ENCODE measurements at regions of chr1 and their contacts with region 1.

Region 1: GRCh38 chr1:92934395-92935378 is 26.6 kb downstream of the DIPK1A start:
- DNase-seq: peak in 1 of 2 donors; percentile 5
- ATAC-seq: peak; percentile 41 to 52
- H3K4me3 ChIP-seq: no peak overlapping the region
- H3K27ac ChIP-seq: peak overlapping the region; percentile 8 to 68 (median 30)
- H3K4me1 ChIP-seq: peaks cover 23 to 27% of the 10 kb centered on the region in 2 donors
- H3K27me3 ChIP-seq: no peaks in the 10 kb centered on the region
- CTCF ChIP-seq: no peak
- POLR2A ChIP-seq: no peak

Region 2: DNA sequence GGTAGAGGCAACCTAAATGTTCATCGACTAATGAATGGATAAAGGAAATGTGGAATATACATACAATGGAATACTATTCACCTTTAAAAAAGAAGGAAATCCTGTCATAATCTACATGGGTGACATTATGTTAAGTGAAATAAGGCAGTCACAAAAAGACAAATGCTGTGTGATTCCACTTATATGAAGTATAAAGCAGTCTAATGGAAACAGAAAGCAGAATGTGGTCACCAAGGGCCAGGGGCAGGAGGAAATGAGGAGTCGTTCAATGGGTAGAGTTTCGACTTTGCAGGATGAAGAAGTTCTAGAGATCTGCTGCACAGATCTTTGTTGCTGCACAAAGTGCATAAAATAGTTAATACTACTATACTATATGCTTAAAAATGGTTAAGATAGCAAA is 18.8 kb after region 1 on chr1:
- in situ Hi-C with region 1: no loop called
- intact Hi-C with region 1: loop called (anchors 2 kb)
- DNase-seq: no peak
- ATAC-seq: no peak
- H3K4me3 ChIP-seq: no peak overlapping the region
- H3K27ac ChIP-seq: peak overlapping the region in 1 of 4 donors; percentile 57
- H3K4me1 ChIP-seq: peaks cover 38 to 46% of the 10 kb centered on the region in 2 donors
- H3K27me3 ChIP-seq: no peaks in the 10 kb centered on the region
- CTCF ChIP-seq: no peak
- POLR2A ChIP-seq: no peak

Region 3: DNA sequence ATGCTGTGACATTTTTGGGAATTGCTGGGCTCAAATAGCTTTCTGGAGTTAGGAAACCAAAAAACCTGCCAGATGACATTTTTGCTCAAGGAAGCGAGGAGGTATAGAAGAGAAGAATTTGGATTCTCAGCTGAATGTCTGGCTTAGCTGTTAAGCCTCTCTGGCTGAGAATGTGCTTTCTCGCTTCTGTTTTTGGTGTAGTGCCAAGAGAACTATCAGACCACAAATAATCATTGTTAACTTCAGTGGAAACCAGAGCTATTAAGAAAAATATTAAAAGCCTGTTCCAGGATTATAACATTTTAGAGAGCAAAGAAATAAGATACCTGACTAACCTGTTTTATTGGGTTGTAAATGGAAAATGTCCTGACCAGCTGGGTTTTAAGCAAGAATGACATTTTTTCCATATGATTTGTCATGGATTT is 66.1 kb after region 1 on chr1:
- in situ Hi-C with region 1: no loop called
- intact Hi-C with region 1: no loop called
- DNase-seq: no peak
- ATAC-seq: no peak
- H3K4me3 ChIP-seq: no peak overlapping the region
- H3K27ac ChIP-seq: no peak overlapping the region
- H3K4me1 ChIP-seq: peaks cover 0 to 10% of the 10 kb centered on the region in 2 donors
- H3K27me3 ChIP-seq: no peaks in the 10 kb centered on the region
- CTCF ChIP-seq: no peak
- POLR2A ChIP-seq: no peak

Region 4: DNA sequence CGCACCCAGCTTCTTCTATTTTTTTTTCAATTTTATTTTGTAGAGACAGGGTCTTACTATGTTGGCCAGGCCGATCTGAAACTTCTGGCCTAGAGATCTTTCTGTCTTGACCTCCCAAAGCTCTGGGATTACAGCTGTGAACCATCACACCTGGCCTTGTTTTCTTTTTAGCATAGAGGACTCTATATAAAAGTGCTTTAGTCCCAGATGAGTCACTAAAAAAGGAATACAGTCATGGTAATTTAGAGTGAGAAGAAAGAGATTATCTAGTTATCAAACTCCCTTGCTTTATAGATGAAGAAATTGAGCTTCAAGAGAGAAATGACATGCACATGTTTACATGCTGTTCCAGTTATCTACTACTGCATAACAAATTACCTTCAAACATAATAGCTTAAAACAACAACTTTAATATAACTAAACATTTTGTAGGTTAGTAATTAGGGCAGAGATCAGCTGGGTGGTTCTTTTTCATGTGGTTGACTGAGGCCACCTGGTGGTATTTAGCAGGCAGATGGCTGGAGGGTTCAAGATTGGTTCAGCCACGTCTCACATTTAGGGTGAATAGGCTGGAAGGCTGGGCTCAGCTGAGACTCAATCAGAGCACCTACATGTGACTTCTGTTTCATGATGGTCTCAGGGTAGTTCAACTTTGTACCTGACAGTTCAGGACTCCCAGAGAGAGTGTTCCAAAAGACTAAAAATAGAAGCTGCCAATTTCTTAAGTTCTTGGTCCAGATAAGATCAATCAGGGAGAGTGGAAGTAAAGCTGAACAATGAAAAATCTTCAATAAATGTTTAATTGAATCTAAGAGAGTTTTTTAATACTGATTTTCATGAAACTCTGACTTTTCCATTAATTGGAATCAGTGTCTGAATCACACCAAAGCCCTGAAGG is 127.5 kb after region 1 on chr1:
- in situ Hi-C with region 1: no loop called
- intact Hi-C with region 1: no loop called
- DNase-seq: no peak
- ATAC-seq: no peak
- H3K4me3 ChIP-seq: no peak overlapping the region
- H3K27ac ChIP-seq: no peak overlapping the region
- H3K4me1 ChIP-seq: no peaks in the 10 kb centered on the region
- H3K27me3 ChIP-seq: no peaks in the 10 kb centered on the region
- CTCF ChIP-seq: peak in 3 of 5 experiments; percentile 22 to 43 (median 28)
- POLR2A ChIP-seq: no peak